OCI-LY7 (cell line): ENCODE measurements at regions of chr15 and their contacts with region 1.

Region 1: DNA sequence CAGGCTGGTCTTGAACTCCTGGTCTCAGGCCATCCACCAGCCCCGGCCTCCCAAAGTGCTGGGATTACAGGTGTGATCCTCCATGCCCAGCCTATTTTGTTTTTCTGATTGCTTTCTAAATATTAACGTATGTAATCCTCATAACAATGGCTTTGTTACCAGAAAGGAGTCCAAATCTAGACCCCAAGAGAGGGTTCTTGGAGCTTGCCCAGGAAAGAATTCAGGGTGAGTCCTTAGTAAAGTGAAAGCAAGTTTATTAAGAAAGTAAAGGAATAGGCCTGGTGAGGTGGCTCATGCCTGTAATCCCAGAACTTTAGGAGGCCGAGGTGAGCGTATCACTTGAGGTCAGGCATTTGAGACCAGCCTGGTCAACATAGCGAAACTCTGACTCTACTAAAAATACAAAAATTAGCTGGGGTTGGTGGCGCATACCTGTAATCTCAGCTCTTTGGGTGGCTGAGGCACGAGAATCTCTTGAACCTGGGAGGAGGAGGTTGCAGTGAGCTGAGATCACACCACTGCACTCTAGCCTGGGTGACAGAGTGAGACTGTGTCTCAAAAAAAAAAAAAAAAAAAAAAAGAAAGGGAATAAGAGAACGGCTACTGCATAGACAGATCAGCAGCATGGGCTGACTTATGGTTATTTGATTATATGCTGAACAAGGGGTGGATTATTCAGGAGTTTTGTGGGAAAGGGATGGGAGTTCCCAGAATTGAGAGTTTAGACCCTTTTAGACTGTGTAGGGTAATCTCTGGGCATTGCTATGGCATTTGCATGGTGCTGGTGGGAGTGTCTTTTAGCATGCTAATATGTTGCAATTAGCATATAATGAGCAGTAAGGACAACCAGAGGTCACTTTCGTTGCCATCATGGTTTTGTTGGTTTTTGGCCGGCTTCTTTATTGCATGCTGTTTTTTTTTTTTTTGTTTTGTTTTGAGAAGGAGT is 36.1 kb downstream of the TYRO3 start:
- DNase-seq: no peak
- H3K4me3 ChIP-seq: no peak overlapping the region
- H3K27ac ChIP-seq: no peak overlapping the region
- H3K4me1 ChIP-seq: no peaks in the 10 kb centered on the region
- CTCF ChIP-seq: no peak

Region 2: DNA sequence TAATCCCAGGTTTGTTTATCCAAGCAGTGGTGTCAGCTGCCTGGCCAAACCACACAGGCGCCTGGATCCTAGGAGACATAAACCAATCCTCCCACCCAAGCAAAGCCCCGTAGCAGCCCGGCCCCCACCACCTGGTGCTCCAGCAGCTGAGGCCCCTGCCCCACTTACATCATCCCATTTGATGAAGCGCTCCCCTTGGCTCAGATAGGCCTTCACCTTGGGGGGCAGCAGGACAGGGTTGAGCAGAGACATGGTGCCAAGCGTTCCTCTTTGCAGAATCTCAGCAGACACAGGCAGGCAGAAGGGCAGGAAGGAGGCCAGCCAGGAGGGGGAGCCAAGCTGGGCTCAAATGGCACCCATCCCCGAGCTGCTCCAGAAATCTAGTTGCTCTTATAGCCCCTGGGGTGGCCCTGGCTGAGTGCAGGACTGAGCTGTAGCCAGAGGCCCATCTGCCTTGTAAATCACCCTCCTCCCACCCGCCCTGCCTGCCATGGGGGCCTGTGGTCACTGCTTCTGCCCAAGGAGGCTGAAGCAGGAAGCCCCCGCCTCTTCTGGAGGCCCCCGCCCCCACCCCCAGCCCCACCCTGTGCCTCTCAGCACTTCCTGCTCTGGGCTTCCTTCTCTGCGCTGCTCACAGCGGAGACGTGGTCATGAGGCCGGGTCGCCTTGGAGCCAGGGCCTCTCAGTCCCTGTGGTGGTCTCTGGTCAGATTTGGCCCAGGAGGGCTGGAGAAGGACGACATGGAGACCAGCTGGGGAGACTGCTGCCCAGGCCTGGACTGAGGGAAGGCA is 1287.5 kb before region 1 on chr15 and contains the start of gene PLCB2:
- CTCF ChIA-PET with region 1: no interaction called
- POLR2A ChIA-PET with region 1: no interaction called
- intact Hi-C with region 1: no loop called
- DNase-seq: peak; percentile 18
- H3K4me3 ChIP-seq: no peak within 1 kb of the TSS
- H3K27ac ChIP-seq: no peak within 1 kb of the TSS
- H3K4me1 ChIP-seq: no peaks in the 10 kb centered on the region
- CTCF ChIP-seq: peak; percentile 41; the same call in 1 of the 2 replicates
- total RNA-seq, gene PLCB2: not detected in 2 replicates

Region 3: GRCh38 chr15:41564286-41564959 is 30.7 kb before region 1 on chr15:
- CTCF ChIA-PET with region 1: no interaction called
- POLR2A ChIA-PET with region 1: interaction called, 13 read pairs
- intact Hi-C with region 1: no loop called
- DNase-seq: peak; percentile 19
- H3K4me3 ChIP-seq: no peak overlapping the region
- H3K27ac ChIP-seq: no peak overlapping the region
- H3K4me1 ChIP-seq: no peaks in the 10 kb centered on the region
- CTCF ChIP-seq: no peak